ENCODE measurements at regions of chr3 and their contacts with region 1.

Region 1: GRCh38 chr3:40317061-40317855 is 7.8 kb downstream of the EIF1B start:
- DNase-seq: peak in 3 of 10 donors; percentile 15 to 62 (median 40)
- H3K4me3 ChIP-seq: peak overlapping the region in 1 of 59 donors; percentile 17
- H3K27ac ChIP-seq: peak overlapping the region in 9 of 59 donors; percentile 0 to 52 (median 19)
- H3K27me3 ChIP-seq: no peaks in the 10 kb centered on the region
- CTCF ChIP-seq: peak; percentile 79 to 99 (median 89)

Region 2: DNA sequence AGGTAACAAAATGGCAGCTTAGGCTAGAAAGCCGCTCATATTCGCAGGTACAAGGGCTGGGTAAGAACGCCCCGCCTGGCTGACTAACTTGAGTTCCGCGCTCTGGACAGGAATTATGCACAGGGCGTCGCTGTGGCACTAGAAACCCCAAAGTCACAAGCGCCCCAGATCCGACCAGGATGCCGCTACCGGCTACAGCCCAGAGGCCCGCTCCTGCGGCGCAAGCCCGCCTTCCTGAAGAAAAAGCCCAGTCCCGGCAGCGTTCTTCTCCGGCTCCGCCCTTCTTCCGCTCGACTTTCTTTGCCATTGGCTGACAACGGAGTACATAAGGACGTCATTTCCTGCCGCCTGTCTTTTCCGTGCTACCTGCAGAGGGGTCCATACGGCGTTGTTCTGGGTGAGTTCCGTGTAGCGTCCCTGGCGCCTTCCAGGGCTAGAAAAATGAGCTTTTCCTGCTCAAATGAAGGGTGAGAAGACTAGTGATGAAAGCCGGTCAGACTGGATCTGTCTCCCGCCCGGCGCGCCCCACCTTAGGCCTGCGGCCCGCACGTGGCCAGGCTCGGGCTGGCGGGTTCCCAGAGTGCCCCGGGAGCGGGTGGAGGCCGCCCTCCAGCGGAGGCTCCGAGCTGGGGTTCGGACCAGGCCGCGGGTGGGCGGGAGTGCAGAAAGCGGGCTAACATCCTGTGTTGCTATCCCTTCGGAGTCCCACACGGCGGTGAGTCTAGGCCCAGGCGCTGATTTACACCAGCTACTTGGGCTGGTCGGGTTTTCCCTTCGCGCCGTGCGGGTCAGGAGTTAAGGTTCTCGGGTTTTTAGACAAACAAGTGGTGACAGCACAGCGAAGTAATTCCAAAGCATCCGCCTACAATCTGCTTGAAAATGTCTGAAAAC is 910.6 kb before region 1 on chr3 and contains the start of gene RPSA:
- intact Hi-C with region 1: loop called (anchors 5 to 10 kb)
- DNase-seq: peak; percentile 88 to 97 (median 97)
- H3K4me3 ChIP-seq: peak within 1 kb of the TSS; percentile 63 to 99 (median 85)
- H3K27ac ChIP-seq: peak within 1 kb of the TSS in 57 of 59 donors; percentile 27 to 92 (median 76)
- H3K27me3 ChIP-seq: no peaks in the 10 kb centered on the region
- CTCF ChIP-seq: peak in 53 of 56 donors; percentile 7 to 72 (median 45)
- total RNA-seq, gene RPSA: 285 to 584 (median 399) TPM

Region 3: DNA sequence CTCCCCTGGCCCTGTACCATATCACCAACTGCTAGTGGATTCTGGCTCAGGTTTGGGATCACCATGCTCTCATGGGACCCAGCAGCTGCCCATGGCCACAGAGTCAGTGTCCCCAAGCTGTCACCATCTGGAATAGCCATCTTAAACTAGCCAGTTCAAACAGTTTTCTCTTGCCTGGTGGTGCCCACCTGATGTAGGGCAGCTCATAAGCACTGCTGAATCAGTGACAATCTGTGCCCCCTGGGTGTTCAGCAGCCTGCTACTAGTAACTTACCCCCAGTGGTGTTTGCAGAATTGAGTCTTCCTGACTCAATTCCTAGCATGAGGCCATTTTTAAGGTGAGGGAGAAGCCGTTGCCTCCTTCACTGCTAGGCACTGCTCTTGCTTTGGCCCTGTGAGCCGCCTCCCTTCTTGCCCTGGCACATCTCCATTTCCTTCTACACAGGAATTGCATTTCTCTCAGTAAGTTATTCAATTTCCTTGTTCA is 902.8 kb before region 1 on chr3:
- intact Hi-C with region 1: loop called (anchors 5 to 10 kb)
- DNase-seq: no peak
- H3K4me3 ChIP-seq: no peak overlapping the region
- H3K27ac ChIP-seq: peak overlapping the region in 1 of 59 donors; percentile 23
- H3K27me3 ChIP-seq: no peaks in the 10 kb centered on the region
- CTCF ChIP-seq: no peak

Region 4: DNA sequence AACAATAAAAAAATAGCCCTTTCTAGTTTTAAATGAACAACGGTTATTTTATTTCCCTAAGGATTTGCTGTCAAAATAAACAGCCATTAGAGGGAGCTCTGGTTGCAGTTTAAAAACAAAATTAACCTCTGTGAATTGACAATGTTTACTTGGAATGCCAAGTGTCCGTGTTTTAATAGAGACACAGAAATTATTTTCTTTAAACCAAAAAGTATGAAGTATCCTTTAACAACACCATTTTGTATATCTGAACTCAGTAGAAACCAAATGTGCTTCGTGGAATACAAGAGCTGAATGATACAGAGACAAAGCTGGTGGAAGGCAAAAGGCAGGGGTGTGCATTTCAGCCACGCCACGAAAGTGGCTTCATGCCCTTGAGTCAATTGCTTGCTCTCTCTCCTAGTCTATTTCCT is 775.3 kb before region 1 on chr3:
- intact Hi-C with region 1: loop called (anchors 10 kb)
- DNase-seq: no peak
- H3K4me3 ChIP-seq: peak overlapping the region in 57 of 59 donors; percentile 1 to 63 (median 41)
- H3K27ac ChIP-seq: peak overlapping the region in 22 of 59 donors; percentile 2 to 63 (median 26)
- H3K27me3 ChIP-seq: no peaks in the 10 kb centered on the region
- CTCF ChIP-seq: peak; percentile 55 to 85 (median 72)

Region 5: DNA sequence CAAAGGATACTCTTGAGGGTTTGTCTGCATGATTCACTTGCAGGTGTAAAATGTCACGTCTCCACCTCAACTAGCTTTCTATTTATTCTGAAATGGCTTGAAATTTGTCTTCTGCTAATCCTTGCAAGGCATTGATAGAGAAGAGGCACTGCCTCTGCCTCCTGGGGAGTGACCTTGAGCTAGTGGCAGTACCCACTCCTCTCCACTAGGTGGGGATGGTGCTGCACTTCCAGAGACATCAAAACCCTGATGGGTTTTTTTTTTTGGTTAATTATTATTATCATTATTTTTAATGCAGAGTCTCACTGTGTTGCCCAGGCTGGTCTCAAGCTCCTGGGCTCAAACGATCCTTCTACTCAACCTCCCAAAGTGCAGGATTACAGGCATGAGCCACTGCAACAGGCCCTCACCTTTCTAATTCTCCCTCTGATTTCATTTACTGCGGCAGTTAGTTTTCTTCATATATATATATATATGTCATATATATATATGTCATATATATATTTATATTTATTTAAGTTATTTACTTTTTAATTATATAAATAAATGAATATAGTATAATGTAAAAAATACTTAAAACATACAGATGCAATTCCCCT is 125.3 kb before region 1 on chr3:
- intact Hi-C with region 1: loop called (anchors 1 to 2 kb)
- DNase-seq: peak; percentile 44 to 76 (median 65)
- H3K4me3 ChIP-seq: no peak overlapping the region
- H3K27ac ChIP-seq: peak overlapping the region in 15 of 59 donors; percentile 4 to 68 (median 25)
- H3K27me3 ChIP-seq: no peaks in the 10 kb centered on the region
- CTCF ChIP-seq: peak; percentile 89 to 99 (median 97)

Measured in dorsolateral prefrontal cortex (tissue), 120 donors.